ENCODE measurements at regions of chr16 and their contacts with region 1.

Region 1: GRCh38 chr16:636206-637080 is at the start of gene METTL26:
- DNase-seq: peak; percentile 94
- ATAC-seq: peak; percentile 73
- H3K4me3 Mint-ChIP-seq: peak within 1 kb of the TSS; percentile 97
- H3K27ac Mint-ChIP-seq: peak within 1 kb of the TSS; percentile 99
- H3K4me1 Mint-ChIP-seq: peaks cover 19% of the 10 kb centered on the region
- H3K27me3 Mint-ChIP-seq: peaks cover 4% of the 10 kb centered on the region; the same call in 1 of the 2 replicates
- CTCF ChIP-seq: no peak
- total RNA-seq, gene METTL26: 115 to 121 TPM (median 115 TPM) in 3 replicates

Region 2: GRCh38 chr16:500709-501108 is 135.7 kb before region 1 on chr16:
- CTCF ChIA-PET with region 1: interaction called, 10 read pairs
- POLR2A ChIA-PET with region 1: no interaction called
- DNase-seq: no peak
- ATAC-seq: no peak
- H3K4me3 Mint-ChIP-seq: no peak overlapping the region
- H3K27ac Mint-ChIP-seq: no peak overlapping the region
- H3K4me1 Mint-ChIP-seq: peaks cover 3% of the 10 kb centered on the region; the same call in 1 of the 2 replicates
- H3K27me3 Mint-ChIP-seq: no peaks in the 10 kb centered on the region
- CTCF ChIP-seq: no peak

Region 3: GRCh38 chr16:761987-762513 is 125.6 kb after region 1 on chr16:
- CTCF ChIA-PET with region 1: no interaction called
- POLR2A ChIA-PET with region 1: no interaction called
- DNase-seq: no peak
- ATAC-seq: peak; percentile 29; the same call in 1 of the 2 replicates
- H3K4me3 Mint-ChIP-seq: no peak overlapping the region
- H3K27ac Mint-ChIP-seq: no peak overlapping the region
- H3K4me1 Mint-ChIP-seq: no peaks in the 10 kb centered on the region
- H3K27me3 Mint-ChIP-seq: no peaks in the 10 kb centered on the region
- CTCF ChIP-seq: no peak